Upper lobe of right lung (tissue), 1 donor: ENCODE measurements at regions of chr7 and their contacts with region 1.

Region 1: DNA sequence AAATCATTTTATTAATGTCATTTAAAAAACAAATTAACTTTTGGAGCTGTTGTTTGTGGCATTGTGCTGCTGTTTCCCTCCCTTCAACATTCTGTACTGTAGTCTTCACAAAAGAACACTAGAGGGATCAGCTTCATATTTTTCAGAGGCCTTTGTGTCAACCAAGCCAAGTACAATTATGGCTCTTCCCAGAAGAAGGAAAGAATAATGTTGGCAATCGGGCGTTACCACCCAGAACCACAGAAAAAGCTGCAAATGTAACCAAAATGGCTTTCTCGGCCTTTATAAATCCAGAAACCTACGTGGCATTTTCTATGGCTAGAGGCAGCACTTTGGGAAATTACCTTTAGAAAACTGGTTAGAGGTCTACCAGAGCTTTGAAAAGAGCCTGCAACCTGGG is 98.8 kb upstream of the COL1A2 start:
- DNase-seq: no peak
- ATAC-seq: peak; percentile 43
- H3K4me3 ChIP-seq: no peak overlapping the region
- H3K27ac ChIP-seq: peak overlapping the region; percentile 45
- H3K4me1 ChIP-seq: peaks cover 4% of the 10 kb centered on the region
- H3K27me3 ChIP-seq: no peaks in the 10 kb centered on the region
- CTCF ChIP-seq: peak; percentile 44

Region 2: GRCh38 chr7:94374231-94374630 is 78.4 kb after region 1 on chr7:
- intact Hi-C with region 1: no loop called
- DNase-seq: peak; percentile 66
- ATAC-seq: peak; percentile 74
- H3K4me3 ChIP-seq: peak overlapping the region; percentile 21
- H3K27ac ChIP-seq: peak overlapping the region; percentile 80
- H3K4me1 ChIP-seq: peaks cover 7% of the 10 kb centered on the region
- H3K27me3 ChIP-seq: no peaks in the 10 kb centered on the region
- CTCF ChIP-seq: no peak

Region 3: DNA sequence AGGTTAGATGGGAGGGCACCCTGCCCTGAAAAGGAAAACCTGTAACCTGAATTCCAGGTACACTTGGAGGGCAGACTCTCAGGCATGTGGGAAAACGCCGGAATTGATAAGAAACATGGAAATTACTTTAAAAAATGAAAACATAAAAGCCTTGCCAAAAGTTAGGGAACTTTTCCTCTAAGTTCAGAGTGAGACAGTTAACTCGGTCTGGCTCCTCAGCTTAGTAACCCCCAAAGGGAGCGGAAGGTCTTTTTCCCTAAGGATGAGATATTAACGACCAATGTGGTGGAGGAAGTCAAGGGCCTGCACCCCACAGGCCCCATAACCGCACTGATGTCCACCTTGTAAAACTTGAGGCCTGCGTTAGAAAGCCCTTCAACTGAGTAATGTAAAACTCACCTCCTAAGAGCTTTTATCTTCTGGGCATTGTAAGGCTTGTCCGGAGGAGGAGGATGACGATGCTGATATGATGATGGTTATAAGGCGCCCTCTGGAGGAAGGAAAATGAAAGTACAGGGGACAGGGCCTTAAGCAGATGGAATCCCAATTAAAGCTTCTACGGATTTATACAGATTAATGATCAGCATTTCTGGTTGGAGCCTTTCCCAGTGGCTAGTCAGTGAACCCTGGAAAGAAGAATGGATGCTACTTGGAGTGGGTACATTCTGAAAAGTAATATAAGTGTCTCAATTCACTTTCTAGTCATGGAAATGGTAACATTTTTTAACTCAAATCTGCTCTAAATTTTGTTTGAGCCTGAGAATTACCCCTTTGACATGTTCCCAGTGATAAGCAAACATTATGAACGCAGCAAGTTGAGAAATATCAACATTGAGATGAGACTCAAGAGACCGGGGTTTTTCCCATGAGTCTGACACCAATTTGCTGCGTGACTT is 99.5 kb after region 1 on chr7:
- intact Hi-C with region 1: loop called (anchors 10 kb)
- DNase-seq: no peak
- ATAC-seq: peak; percentile 89
- H3K4me3 ChIP-seq: peak overlapping the region; percentile 57
- H3K27ac ChIP-seq: peak overlapping the region; percentile 85
- H3K4me1 ChIP-seq: no peaks in the 10 kb centered on the region
- H3K27me3 ChIP-seq: no peaks in the 10 kb centered on the region
- CTCF ChIP-seq: peak; percentile 81

Region 4: DNA sequence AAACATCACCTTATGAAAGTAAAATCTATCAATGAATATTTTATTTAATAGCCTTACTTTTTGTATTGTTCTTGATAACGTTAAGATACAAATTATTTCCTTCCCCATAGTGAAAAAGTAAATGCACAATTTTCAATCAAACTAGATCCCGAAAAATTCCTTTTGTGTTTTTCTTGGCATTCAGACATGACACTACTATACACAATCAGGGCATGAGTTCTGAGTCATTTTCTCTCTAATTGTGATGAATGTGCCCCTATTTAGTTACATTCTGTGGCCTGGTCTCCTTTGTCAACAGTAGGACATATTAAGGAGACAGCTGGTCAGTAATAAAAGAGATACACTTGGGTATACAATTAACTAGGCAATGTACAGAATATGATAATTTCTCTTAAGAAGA is 118.6 kb after region 1 on chr7:
- intact Hi-C with region 1: no loop called
- DNase-seq: no peak
- ATAC-seq: no peak
- H3K4me3 ChIP-seq: no peak overlapping the region
- H3K27ac ChIP-seq: no peak overlapping the region
- H3K4me1 ChIP-seq: peaks cover 4% of the 10 kb centered on the region
- H3K27me3 ChIP-seq: no peaks in the 10 kb centered on the region
- CTCF ChIP-seq: no peak